ENCODE measurements at regions of chr19 and their contacts with region 1.

Region 1: DNA sequence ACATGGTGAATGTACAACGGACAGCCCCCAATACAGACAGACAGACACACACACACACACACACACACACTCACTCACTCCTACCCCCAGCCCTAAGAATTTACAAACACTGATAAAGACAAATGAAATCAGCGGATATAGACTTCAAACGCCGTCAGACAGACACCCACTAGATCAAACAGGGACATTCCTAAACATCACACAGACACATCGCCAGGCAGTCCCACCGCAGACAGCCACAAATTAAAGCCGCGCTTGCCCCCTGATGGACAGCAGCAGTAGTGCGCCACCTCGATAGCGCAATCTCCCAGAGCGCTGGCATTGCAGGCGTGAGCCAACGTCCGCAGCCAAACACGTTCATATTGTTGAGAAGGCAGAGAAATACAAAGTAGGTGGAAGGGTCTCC is 24.7 kb upstream of the ADGRE1 start:
- DNase-seq: peak; percentile 95
- H3K4me3 ChIP-seq: peak overlapping the region; percentile 18 to 67 (median 36)
- H3K27ac ChIP-seq: peak overlapping the region in 6 of 8 donors; percentile 61 to 81 (median 68)
- H3K4me1 ChIP-seq: peaks cover 0 to 28% (median 14%) of the 10 kb centered on the region in 6 donors
- H3K27me3 ChIP-seq: peaks cover 0 to 2% (median 0%) of the 10 kb centered on the region in 7 donors
- CTCF ChIP-seq: peak; percentile 81 to 98 (median 93)
- POLR2A ChIP-seq: no peak

Region 2: DNA sequence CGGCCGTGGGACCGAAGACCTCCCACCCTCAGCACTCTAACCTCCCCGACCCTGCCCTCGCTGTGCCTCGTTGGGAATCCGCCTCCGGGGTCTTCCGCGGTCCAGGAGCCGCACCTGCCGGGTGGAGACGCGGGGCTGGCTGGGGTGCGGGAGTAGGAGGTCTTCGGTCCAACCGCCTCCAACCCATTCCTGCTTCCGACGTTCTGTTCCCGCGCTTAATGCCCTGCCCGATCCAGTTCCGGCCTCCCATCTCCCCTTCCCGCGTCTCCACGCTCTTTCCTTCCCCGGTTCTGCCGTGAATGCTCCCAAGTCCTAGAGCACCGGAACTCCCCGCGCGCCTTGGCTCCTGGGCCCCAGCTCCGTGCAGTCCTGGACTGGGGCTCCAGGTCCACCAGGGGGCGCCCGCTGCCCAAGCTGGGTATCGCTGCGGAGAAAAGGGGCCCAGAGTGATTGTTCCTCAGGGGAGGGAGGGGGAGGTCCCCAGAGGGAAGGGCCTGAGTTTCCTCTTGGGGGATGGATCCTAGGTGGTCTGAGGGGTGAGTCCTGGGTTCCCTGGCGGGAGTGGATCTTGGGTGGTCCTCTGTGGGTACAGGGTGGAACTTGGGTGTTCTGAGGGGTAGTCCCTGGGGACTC is 345.9 kb before region 1 on chr19:
- intact Hi-C with region 1: loop called (anchors 5 kb)
- DNase-seq: peak; percentile 98
- H3K4me3 ChIP-seq: peak overlapping the region; percentile 55 to 86 (median 65)
- H3K27ac ChIP-seq: peak overlapping the region; percentile 73 to 92 (median 87)
- H3K4me1 ChIP-seq: peaks cover 16 to 60% (median 36%) of the 10 kb centered on the region in 6 donors
- H3K27me3 ChIP-seq: no peaks in the 10 kb centered on the region
- CTCF ChIP-seq: peak; percentile 94 to 99 (median 98)
- POLR2A ChIP-seq: no peak

Region 3: GRCh38 chr19:6632002-6632621 is 230.6 kb before region 1 on chr19:
- intact Hi-C with region 1: loop called (anchors 5 kb)
- DNase-seq: no peak
- H3K4me3 ChIP-seq: no peak overlapping the region
- H3K27ac ChIP-seq: no peak overlapping the region
- H3K4me1 ChIP-seq: peaks cover 0 to 19% (median 6%) of the 10 kb centered on the region in 6 donors
- H3K27me3 ChIP-seq: peaks cover 0 to 21% (median 0%) of the 10 kb centered on the region in 7 donors
- CTCF ChIP-seq: peak; percentile 69 to 86 (median 81)
- POLR2A ChIP-seq: no peak

Region 4: GRCh38 chr19:6737284-6738046 is 125.2 kb before region 1 on chr19 and contains the start of gene GPR108:
- intact Hi-C with region 1: loop called (anchors 5 kb)
- DNase-seq: peak; percentile 100
- H3K4me3 ChIP-seq: peak within 1 kb of the TSS; percentile 64 to 90 (median 84)
- H3K27ac ChIP-seq: peak within 1 kb of the TSS; percentile 91 to 99 (median 98)
- H3K4me1 ChIP-seq: peaks cover 20 to 80% (median 63%) of the 10 kb centered on the region in 6 donors
- H3K27me3 ChIP-seq: peaks cover 0 to 15% (median 0%) of the 10 kb centered on the region in 7 donors
- CTCF ChIP-seq: peak in 1 of 11 experiments; percentile 34
- POLR2A ChIP-seq: peak in 1 of 3 donors; percentile 7
- total RNA-seq, gene GPR108: 35.4 to 75.0 (median 56.0) TPM